ENCODE measurements at regions of chr12 and their contacts with region 1.

Region 1: DNA sequence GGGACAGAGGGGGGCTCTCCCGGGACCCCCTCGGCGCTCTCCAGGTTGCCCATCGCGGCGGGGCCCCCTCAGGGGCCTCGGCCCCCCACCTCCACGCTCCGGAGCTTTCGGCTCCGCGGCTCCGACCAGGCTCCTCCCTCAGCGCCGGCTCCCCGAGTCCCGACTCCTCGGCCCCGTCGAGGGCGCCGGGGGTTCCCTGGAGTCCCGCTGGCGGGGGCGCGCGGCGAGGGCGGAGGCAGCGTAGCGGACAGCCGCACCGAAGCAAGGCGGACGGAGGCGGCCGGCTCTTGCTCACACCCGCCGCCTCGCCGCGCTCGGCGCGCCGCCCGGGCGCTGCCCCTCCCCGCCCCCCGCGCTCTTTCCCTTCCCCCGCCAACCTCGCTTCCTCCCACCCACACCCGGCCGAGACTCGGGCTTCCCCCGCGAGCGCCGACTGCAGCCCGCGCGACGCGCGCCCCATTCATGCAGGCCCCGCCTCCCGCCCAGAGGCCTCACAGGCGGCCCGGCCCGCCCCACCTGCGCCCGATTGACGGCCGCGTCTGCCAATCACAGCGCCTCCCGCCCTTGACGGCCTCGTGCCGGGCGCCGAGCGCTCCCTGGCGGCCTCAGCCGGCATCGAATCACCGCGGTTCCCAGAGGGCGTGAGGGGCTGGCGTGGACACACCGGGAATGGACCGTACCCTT is at the start of gene FMNL3:
- DNase-seq: peak; percentile 96
- H3K4me3 ChIP-seq: peak within 1 kb of the TSS; percentile 73 to 89 (median 84)
- H3K27ac ChIP-seq: peak within 1 kb of the TSS; percentile 80 to 83
- H3K4me1 ChIP-seq: no peaks in the 10 kb centered on the region
- H3K27me3 ChIP-seq: no peaks in the 10 kb centered on the region
- CTCF ChIP-seq: peak; percentile 96 to 98 (median 96)
- POLR2A ChIP-seq: no peak
- total RNA-seq, gene FMNL3: 9.8 to 13.8 (median 13.3) TPM

Region 2: DNA sequence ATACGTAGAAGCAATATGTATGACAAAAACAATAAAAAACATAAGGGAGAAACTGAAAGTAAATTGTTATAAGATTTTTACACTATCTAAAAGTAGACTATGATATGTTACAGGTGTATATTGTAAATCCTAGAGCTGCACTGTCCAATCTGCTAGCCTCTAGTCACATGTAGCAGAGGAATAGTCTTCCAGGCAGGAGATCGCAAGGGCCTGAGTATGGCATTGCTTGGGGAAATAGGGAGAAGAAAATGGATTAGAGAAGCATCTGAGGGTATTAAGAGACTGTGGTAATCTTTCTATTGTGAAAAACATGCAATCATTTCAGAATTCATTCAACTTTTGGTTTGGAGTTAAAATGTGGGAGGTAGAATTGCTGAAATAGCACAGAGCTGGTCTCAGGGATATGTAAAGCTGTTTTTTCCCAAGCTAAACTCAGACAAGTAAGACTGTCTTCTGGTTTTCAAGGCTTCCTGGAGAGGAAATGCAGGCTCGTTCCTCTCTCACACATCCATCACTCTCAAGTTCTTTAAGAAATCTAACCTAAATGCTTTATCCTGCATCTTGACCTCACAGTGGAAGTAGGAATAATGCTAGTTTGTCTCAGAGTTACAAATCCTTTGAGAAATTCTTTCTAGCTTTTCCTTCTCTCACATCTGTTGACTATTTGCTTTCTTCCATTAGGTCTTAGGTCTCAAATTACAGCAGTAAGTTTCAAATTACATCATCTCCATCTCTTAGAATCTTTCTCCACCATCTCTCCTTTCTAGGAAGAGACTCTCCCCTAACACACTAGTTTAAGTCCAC is 1531.5 kb before region 1 on chr12:
- intact Hi-C with region 1: no loop called
- DNase-seq: no peak
- H3K4me3 ChIP-seq: no peak overlapping the region
- H3K27ac ChIP-seq: peak overlapping the region; percentile 23 to 40
- H3K4me1 ChIP-seq: no peaks in the 10 kb centered on the region
- H3K27me3 ChIP-seq: peaks cover 0 to 7% of the 10 kb centered on the region in 2 donors
- CTCF ChIP-seq: no peak
- POLR2A ChIP-seq: no peak

Region 3: DNA sequence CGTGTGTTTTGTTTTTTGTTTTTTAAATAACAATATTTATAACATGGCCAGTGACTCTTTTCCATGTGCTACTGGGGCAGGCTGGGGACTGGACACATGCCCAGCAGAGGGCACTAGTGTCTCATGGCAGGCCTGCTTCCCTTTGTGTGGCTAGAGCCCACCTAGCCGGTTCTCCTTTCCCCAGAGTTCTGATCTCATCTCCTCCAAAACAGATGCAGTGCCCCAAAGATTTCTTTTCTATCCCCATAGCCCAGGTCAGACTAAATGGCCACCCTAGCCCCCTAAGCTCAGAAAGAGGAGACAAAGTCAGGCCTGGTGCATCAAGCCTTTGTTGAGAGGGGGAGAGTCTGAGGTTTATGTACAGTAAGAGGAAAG is 62.7 kb before region 1 on chr12:
- intact Hi-C with region 1: loop called (anchors 5 kb)
- DNase-seq: peak; percentile 69 to 78
- H3K4me3 ChIP-seq: no peak overlapping the region
- H3K27ac ChIP-seq: peak overlapping the region in 1 of 2 donors; percentile 29
- H3K4me1 ChIP-seq: no peaks in the 10 kb centered on the region
- H3K27me3 ChIP-seq: no peaks in the 10 kb centered on the region
- CTCF ChIP-seq: peak; percentile 35 to 95 (median 83)
- POLR2A ChIP-seq: no peak

Region 4: GRCh38 chr12:49720214-49720613 is 12.9 kb after region 1 on chr12:
- intact Hi-C with region 1: no loop called
- DNase-seq: no peak
- H3K4me3 ChIP-seq: no peak overlapping the region
- H3K27ac ChIP-seq: no peak overlapping the region
- H3K4me1 ChIP-seq: no peaks in the 10 kb centered on the region
- H3K27me3 ChIP-seq: no peaks in the 10 kb centered on the region
- CTCF ChIP-seq: no peak
- POLR2A ChIP-seq: no peak

Region 5: GRCh38 chr12:49767333-49767732 is 60.1 kb after region 1 on chr12:
- intact Hi-C with region 1: no loop called
- DNase-seq: no peak
- H3K4me3 ChIP-seq: no peak overlapping the region
- H3K27ac ChIP-seq: no peak overlapping the region
- H3K4me1 ChIP-seq: no peaks in the 10 kb centered on the region
- H3K27me3 ChIP-seq: no peaks in the 10 kb centered on the region
- CTCF ChIP-seq: no peak
- POLR2A ChIP-seq: no peak

Region 6: DNA sequence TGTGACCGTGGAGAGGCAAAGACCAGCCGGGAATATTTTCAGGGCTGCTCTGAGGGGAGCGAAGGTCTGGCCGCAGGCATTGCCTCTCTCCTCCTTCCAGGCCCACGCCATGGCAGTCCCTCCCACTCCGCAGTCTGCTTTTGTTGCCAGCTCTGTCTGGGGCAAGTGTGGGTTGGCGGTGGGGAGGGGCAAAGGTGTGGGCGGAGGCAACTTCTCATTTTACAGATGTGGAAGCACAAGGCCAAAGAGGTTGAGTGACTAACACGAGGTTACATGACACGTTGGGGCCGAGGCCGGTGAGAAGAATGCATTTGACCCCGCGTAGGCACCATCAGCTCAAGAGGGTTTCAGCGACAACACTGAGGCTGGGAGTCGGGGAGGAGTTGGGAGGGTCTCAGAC is 202.6 kb after region 1 on chr12:
- intact Hi-C with region 1: no loop called
- DNase-seq: no peak
- H3K4me3 ChIP-seq: no peak overlapping the region
- H3K27ac ChIP-seq: no peak overlapping the region
- H3K4me1 ChIP-seq: no peaks in the 10 kb centered on the region
- H3K27me3 ChIP-seq: no peaks in the 10 kb centered on the region
- CTCF ChIP-seq: no peak
- POLR2A ChIP-seq: no peak

Measured in breast epithelium (tissue), 4 donors.